Activated CD8-positive, alpha-beta memory T cell treated with anti-CD3 and anti-CD28 coated beads, Interleukin-2, amount 10 ng/mL, durations not matched to agents 7 days and 5 days (primary cell): ENCODE measurements at regions of chr16 and their contacts with region 1.

Region 1: GRCh38 chr16:89764711-89765201 is 43.4 kb downstream of the ZNF276 start:
- DNase-seq: peak; percentile 90
- ATAC-seq: peak; percentile 89
- H3K4me3 Mint-ChIP-seq: peak overlapping the region; percentile 85
- H3K27ac Mint-ChIP-seq: peak overlapping the region; percentile 94
- H3K4me1 Mint-ChIP-seq: peaks cover 59% of the 10 kb centered on the region
- H3K27me3 Mint-ChIP-seq: no peaks in the 10 kb centered on the region

Region 2: DNA sequence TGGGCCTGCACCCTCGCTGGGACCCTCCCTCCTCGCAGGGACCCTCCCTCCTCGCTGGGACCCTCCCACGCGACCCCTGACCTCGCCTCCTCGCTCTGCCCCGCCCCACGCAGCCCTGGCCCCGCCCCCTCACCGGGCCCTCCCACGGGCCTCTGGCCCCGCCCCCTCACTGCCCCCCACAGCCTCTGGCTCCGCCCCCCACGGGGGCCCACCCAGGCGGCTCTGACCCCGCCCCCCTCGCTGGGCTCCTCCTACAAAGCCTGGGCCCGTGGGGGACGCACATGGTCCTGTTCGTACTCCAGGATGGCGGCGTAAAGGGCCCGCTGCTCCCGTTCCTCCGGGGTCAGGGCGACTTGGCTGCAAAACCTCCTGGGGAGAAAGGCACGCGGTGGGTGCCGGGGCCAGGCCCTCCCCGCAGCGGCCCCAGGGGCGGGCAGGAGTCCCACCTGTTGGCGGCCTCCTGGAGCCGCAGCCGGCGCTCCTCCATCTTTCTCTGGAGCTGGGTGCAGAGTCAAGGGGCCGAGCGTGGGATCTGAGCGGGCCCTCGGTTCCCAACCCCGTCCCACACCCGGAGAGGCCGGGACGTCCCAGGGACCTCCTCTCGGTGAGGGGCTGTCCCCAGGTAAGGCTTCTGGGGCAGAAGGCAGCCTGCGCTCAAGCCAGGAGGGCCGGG is 53.0 kb before region 1 on chr16:
- CTCF ChIA-PET with region 1: interaction called, 10 read pairs
- DNase-seq: peak; percentile 87
- ATAC-seq: peak; percentile 92
- H3K4me3 Mint-ChIP-seq: peak overlapping the region; percentile 68
- H3K27ac Mint-ChIP-seq: no peak overlapping the region
- H3K4me1 Mint-ChIP-seq: peaks cover 13% of the 10 kb centered on the region
- H3K27me3 Mint-ChIP-seq: no peaks in the 10 kb centered on the region

Region 3: DNA sequence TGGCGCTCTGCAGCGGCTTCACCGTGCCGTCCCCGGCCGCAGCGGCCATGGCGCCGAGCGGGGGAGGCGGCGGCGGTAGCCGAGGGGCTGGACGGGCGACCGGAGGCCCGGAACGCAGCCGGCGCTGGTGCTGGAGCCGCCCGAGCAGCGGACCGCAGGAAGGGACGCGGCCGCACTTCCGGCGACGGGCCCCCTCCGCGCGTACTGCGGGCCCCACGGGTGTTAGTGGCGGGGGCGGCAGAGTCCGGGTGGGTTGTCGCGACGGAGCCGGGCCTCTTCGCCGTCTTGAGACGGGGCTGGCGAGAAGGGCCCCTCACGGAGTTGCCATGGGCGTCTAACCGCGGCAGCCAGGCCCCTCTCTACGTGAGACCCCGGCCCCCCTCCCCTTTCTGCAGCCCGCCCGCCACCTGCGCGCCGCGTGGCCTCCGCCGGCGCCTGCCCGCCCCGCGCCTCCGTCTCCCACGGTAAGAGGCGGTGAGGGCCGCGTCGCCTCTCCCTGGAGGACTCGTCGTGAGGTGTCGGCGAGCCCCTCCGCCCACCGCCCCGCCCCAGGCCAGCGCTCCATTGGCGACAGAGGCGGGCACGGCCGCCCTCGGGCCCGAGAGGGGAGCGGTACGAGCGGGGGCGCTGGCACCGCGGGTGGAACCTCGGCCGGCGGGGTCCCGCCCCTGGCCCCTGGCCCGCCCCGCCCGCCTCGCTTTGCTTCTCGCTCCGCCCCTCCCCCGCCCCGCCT is 43.8 kb before region 1 on chr16 and contains the starts of genes VPS9D1 and ZNF276:
- CTCF ChIA-PET with region 1: interaction called, 14 read pairs
- DNase-seq: peak; percentile 87
- ATAC-seq: peak; percentile 48
- H3K4me3 Mint-ChIP-seq: peak within 1 kb of the TSS; percentile 86
- H3K27ac Mint-ChIP-seq: peak within 1 kb of the TSS; percentile 99
- H3K4me1 Mint-ChIP-seq: peaks cover 46% of the 10 kb centered on the region
- H3K27me3 Mint-ChIP-seq: no peaks in the 10 kb centered on the region
- total RNA-seq, gene VPS9D1: 3.6 to 4.6 TPM
- total RNA-seq, gene ZNF276: 38.0 to 58.1 TPM

Region 4: DNA sequence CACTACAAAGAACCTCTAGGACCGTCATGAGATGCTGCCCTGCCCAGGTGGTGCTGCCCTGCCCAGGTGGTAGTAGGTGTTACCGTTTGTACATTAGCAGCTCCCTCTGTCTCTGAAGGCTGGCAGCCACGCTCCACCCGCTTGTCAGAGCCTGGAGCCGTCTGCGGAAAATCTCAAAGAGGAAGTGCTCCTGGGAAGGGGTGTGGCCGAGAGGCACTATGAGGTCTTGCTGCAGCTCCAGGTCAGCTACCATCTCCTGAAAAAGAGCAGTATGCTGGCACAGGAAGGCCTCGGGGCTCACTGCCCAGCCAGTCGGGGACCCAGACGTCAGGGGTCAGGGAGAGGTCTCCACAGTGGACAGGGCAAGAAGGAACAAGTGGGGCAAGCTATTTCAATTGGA is 15.1 kb before region 1 on chr16:
- CTCF ChIA-PET with region 1: interaction called, 12 read pairs
- DNase-seq: no peak
- ATAC-seq: no peak
- H3K4me3 Mint-ChIP-seq: no peak overlapping the region
- H3K27ac Mint-ChIP-seq: no peak overlapping the region
- H3K4me1 Mint-ChIP-seq: peaks cover 2% of the 10 kb centered on the region
- H3K27me3 Mint-ChIP-seq: no peaks in the 10 kb centered on the region